Ovary (tissue), 10 donors: ENCODE measurements at regions of chr2 and their contacts with region 1.

Region 1: DNA sequence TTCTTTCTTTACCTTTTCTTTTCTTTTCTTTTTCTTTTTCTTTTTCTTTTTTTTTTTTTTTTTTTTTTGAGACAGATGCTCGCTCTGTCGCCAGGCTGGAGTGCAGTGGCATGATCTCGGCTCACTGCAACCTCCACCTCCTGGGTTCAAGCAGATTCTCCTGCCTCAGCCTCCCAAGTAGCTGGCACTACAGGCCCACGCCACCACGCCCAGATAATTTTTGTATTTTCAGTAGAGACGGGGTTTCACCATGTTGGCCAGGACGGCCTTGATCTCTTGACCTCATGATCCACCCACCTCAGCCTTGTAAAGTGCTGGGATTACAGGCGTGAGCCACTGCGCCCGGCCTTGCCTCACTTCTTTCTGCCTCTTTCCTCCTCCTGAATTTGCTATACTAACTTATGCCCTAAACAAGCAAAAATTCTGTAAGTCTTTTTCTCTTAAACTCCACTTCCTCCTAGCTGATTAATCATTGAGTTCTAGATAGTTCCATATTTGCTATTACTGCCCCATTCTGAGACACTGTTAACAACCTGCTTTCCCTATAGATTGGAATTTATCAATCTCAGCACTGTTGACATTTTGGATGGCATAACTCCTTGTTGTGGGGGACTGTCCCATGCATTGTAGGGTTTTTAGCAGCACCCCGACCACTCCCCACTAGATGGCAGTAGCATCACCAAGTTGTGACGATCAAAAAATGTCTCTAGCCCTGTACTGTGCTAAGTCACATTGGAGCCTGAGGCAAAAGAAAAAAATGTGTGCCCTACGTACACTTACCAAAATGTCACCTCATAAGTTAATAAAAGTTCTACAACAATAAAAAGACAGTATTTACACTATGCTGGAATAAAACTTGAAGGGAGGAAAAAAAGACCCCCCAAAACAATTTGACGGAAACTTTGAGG is 16.4 kb upstream of the THADA start:
- DNase-seq: peak; percentile 68 to 84 (median 76)
- H3K4me3 ChIP-seq: no peak overlapping the region
- H3K27ac ChIP-seq: no peak overlapping the region
- H3K4me1 ChIP-seq: peaks cover 2% of the 10 kb centered on the region
- H3K27me3 ChIP-seq: no peaks in the 10 kb centered on the region
- CTCF ChIP-seq: peak in 2 of 3 donors; percentile 60 to 84
- EP300 ChIP-seq: no peak
- POLR2A ChIP-seq: no peak

Region 2: GRCh38 chr2:43559391-43560230 is 52.6 kb before region 1 on chr2:
- intact Hi-C with region 1: no loop called
- DNase-seq: no peak
- H3K4me3 ChIP-seq: no peak overlapping the region
- H3K27ac ChIP-seq: no peak overlapping the region
- H3K4me1 ChIP-seq: no peaks in the 10 kb centered on the region
- H3K27me3 ChIP-seq: no peaks in the 10 kb centered on the region
- CTCF ChIP-seq: no peak
- EP300 ChIP-seq: no peak
- POLR2A ChIP-seq: no peak

Region 3: DNA sequence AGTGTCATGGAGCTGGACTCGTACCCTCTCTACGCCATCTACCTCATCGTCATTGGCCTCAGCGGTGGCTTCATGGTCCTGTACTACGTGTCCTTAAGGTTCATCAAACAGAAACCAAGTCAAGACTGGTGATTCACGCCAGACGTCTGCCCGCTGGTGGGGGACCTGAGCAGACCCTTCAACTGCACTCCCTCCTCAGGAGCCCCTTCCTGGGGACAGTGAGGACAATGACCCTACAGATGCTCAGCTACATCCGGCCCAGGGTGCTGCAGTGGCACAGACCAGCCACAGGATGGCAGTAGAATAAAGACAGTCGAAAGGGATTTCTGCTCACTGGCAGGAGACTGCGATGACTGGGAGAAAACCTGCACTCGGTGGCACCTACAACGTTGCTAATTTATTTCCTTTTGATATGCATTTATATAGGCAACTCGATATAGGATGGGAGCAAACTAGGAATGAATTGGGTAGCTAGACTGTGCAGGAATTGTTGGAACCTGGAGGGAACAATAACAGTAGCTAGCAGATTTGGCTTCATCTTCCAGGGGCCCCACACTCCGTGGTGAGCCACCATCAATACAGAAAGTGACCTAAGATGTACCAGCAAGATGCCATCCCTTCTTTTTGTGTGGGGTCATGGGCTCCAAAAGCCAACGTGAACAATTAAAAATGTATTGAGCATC is 265.7 kb after region 1 on chr2:
- intact Hi-C with region 1: loop called in 2 of 4 experiments (anchors 10 kb)
- DNase-seq: peak; percentile 30 to 72 (median 55)
- H3K4me3 ChIP-seq: no peak overlapping the region
- H3K27ac ChIP-seq: no peak overlapping the region
- H3K4me1 ChIP-seq: no peaks in the 10 kb centered on the region
- H3K27me3 ChIP-seq: no peaks in the 10 kb centered on the region
- CTCF ChIP-seq: peak; percentile 49 to 65 (median 56)
- EP300 ChIP-seq: no peak
- POLR2A ChIP-seq: no peak

Region 4: DNA sequence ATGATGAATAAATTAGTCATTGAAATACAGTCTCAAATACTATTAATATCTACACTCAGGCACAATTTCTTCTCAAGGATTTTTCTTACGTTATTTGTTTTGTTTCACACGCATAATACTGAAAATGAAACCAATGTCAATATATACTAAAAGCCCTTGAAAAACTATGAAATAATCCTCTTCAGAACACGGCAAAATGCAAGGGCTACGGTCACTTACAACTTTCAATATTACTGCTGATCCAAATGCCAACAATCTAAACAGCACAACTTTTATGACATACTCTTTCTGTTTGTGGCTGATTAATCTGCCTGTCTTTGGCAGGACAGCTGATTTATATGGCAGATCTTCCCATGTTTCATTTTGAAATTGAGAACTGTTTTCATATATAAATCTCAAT is 315.2 kb after region 1 on chr2:
- intact Hi-C with region 1: loop called in 1 of 4 experiments (anchors 10 kb)
- DNase-seq: no peak
- H3K4me3 ChIP-seq: no peak overlapping the region
- H3K27ac ChIP-seq: no peak overlapping the region
- H3K4me1 ChIP-seq: no peaks in the 10 kb centered on the region
- H3K27me3 ChIP-seq: no peaks in the 10 kb centered on the region
- CTCF ChIP-seq: no peak
- EP300 ChIP-seq: no peak
- POLR2A ChIP-seq: no peak